Body of pancreas (tissue), 4 donors: ENCODE measurements at regions of chr6 and their contacts with region 1.

Region 1: GRCh38 chr6:31366693-31367470 is 9.9 kb upstream of the HLA-B start:
- DNase-seq: peak; percentile 84 to 89 (median 84)
- ATAC-seq: peak; percentile 97
- H3K4me3 ChIP-seq: no peak overlapping the region
- H3K27ac ChIP-seq: no peak overlapping the region
- H3K4me1 ChIP-seq: peaks cover 8% of the 10 kb centered on the region
- H3K27me3 ChIP-seq: no peaks in the 10 kb centered on the region
- CTCF ChIP-seq: peak; percentile 83 to 98 (median 92)
- POLR2A ChIP-seq: no peak

Region 2: DNA sequence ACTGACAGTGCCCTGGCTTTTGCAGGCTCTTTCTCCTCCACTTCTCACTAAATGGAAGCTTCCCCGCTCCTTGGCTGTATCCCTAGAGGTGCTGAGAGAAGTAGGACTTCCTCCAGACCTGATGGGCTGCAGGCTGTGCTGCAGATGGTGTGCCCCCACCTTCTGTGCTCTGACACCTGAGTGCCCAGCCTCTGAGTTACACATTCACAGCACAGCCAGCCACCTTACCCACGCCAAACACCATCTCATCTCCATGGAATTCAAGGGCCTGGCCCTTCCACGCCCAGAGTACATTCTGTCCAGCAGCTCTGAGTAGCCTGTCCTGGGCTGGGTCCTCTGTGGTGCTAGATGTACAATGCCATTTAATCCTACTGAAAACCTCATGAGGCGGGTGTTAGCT is 440.2 kb before region 1 on chr6:
- intact Hi-C with region 1: no loop called
- DNase-seq: peak; percentile 55 to 85 (median 72)
- ATAC-seq: peak; percentile 93
- H3K4me3 ChIP-seq: no peak overlapping the region
- H3K27ac ChIP-seq: peak overlapping the region; percentile 28 to 78 (median 60)
- H3K4me1 ChIP-seq: peaks cover 23% of the 10 kb centered on the region
- H3K27me3 ChIP-seq: no peaks in the 10 kb centered on the region
- CTCF ChIP-seq: no peak
- POLR2A ChIP-seq: peak in 2 of 3 donors; percentile 24 to 36

Region 3: DNA sequence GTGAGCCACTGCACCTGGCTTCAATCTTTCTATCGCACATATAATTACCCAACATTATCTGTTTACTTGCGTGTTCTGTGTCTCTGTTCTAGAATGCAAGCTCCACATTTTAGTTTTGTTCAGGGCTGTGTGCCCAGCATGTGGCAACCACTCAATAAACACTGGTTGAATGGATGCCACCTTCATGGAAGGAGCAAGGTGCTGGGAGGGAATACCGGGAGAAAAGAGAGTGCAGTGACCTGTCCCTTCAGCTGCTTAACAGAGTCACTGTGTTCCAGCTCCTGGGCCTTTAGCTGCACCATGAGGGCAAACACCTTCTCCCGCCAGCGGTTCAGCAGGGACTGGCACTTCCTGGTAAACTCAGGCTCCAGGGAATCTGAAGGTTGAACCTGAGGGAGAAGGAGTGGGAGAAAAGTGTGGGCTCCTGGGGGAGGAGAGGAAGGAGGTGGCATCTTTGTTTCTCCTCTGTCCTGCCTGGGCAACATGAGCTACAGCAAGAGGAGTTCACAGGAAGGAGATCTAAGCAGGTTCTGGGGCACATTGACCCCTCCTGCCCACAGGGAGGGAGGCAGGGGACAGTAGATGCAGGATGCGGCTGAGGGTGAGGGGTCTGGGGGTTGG is 216.9 kb before region 1 on chr6:
- intact Hi-C with region 1: loop called (anchors 5 kb)
- DNase-seq: no peak
- ATAC-seq: no peak
- H3K4me3 ChIP-seq: no peak overlapping the region
- H3K27ac ChIP-seq: no peak overlapping the region
- H3K4me1 ChIP-seq: no peaks in the 10 kb centered on the region
- H3K27me3 ChIP-seq: no peaks in the 10 kb centered on the region
- CTCF ChIP-seq: no peak
- POLR2A ChIP-seq: no peak

Region 4: GRCh38 chr6:31197559-31198305 is 169.2 kb before region 1 on chr6:
- intact Hi-C with region 1: loop called (anchors 5 kb)
- DNase-seq: peak; percentile 92 to 95 (median 94)
- ATAC-seq: peak; percentile 90
- H3K4me3 ChIP-seq: peak overlapping the region; percentile 62 to 65
- H3K27ac ChIP-seq: peak overlapping the region; percentile 85 to 99 (median 96)
- H3K4me1 ChIP-seq: peaks cover 37% of the 10 kb centered on the region
- H3K27me3 ChIP-seq: no peaks in the 10 kb centered on the region
- CTCF ChIP-seq: peak in 3 of 7 experiments; percentile 6 to 11 (median 9)
- POLR2A ChIP-seq: peak; percentile 65 to 94 (median 92)